GM18951 (cell line): ENCODE measurements at regions of chr2 and their contacts with region 1.

Region 1: GRCh38 chr2:172311921-172312345 is 115.5 kb upstream of the ITGA6 start:
- POLR2A ChIP-seq: no peak

Region 2: GRCh38 chr2:172358691-172359556 is 47.0 kb after region 1 on chr2:
- in situ Hi-C with region 1: loop called (anchors 5 kb)
- POLR2A ChIP-seq: no peak